ENCODE measurements at regions of chr5 and their contacts with region 1.

Region 1: DNA sequence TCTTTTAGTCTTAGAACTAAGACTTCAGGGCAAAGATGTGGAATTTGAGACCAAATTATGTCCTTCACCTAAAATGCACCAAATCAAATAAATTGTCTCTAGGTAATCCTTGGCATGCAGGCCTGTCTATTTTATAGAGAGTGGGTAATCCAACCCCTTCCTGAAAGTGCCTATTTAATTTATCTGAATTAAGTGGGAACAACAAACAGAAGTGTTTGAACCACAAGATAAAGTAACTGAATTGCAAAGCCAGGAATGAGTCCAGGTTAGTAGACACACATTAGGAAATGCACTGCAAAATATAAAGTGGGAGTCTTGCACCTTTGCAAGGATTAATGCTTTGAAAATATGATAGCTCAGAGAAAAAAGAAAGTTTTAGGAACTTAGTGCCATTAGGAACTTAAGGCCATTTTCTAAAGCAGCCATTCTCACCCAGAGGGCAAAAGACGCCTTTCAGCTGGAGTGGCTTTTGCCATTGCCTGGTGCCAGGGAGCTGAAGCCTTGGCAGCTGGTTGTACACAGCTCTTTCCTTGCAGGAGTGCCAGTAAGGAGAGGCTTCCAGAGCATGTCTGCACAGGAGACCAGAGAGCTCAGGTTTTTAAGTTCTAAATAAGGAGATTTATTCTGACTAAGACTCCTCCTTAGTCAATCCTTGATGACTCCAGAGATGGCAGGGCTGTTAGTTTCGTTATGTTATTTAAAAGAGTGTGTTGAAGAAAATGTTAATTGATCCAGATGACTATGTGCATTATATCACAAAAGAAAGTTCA is 151.7 kb upstream of the ELL2 start:
- DNase-seq: peak; percentile 13
- H3K4me3 Mint-ChIP-seq: no peak overlapping the region
- H3K27ac Mint-ChIP-seq: no peak overlapping the region
- H3K4me1 Mint-ChIP-seq: peaks cover 41% of the 10 kb centered on the region
- H3K27me3 Mint-ChIP-seq: peaks cover 4% of the 10 kb centered on the region

Region 2: DNA sequence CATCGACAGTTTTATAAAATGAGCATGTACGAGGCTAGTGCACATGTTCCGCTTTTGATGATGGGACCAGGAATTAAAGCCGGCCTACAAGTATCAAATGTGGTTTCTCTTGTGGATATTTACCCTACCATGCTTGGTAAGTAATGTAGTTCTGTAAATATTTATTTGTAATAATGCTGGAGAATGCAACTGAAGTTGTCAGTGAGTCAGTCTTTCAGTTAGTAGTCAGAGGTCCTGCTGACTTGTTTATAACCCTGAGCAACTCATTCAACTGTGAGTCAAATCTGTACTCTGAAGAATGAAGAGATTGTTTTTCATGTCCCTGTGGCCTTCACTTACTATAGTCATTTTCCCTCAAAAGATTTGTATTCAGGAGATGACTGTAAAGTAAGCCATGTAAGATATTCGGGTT is 521.9 kb before region 1 on chr5:
- CTCF ChIA-PET with region 1: no interaction called
- POLR2A ChIA-PET with region 1: no interaction called
- intact Hi-C with region 1: loop called (anchors 10 kb)
- DNase-seq: no peak
- H3K4me3 Mint-ChIP-seq: no peak overlapping the region
- H3K27ac Mint-ChIP-seq: no peak overlapping the region
- H3K4me1 Mint-ChIP-seq: peaks cover 30% of the 10 kb centered on the region
- H3K27me3 Mint-ChIP-seq: no peaks in the 10 kb centered on the region

Region 3: GRCh38 chr5:96065577-96066385 is 47.6 kb before region 1 on chr5:
- CTCF ChIA-PET with region 1: no interaction called
- POLR2A ChIA-PET with region 1: no interaction called
- intact Hi-C with region 1: loop called (anchors 1 kb)
- DNase-seq: peak; percentile 38
- H3K4me3 Mint-ChIP-seq: no peak overlapping the region
- H3K27ac Mint-ChIP-seq: peak overlapping the region; percentile 83
- H3K4me1 Mint-ChIP-seq: peaks cover 48% of the 10 kb centered on the region
- H3K27me3 Mint-ChIP-seq: no peaks in the 10 kb centered on the region

Region 4: GRCh38 chr5:96079075-96079474 is 34.3 kb before region 1 on chr5:
- CTCF ChIA-PET with region 1: interaction called, 4 read pairs
- POLR2A ChIA-PET with region 1: no interaction called
- intact Hi-C with region 1: loop called (anchors 1 kb)
- DNase-seq: peak; percentile 67
- H3K4me3 Mint-ChIP-seq: no peak overlapping the region
- H3K27ac Mint-ChIP-seq: peak overlapping the region; percentile 89
- H3K4me1 Mint-ChIP-seq: peaks cover 45% of the 10 kb centered on the region
- H3K27me3 Mint-ChIP-seq: peaks cover 5% of the 10 kb centered on the region

Region 5: DNA sequence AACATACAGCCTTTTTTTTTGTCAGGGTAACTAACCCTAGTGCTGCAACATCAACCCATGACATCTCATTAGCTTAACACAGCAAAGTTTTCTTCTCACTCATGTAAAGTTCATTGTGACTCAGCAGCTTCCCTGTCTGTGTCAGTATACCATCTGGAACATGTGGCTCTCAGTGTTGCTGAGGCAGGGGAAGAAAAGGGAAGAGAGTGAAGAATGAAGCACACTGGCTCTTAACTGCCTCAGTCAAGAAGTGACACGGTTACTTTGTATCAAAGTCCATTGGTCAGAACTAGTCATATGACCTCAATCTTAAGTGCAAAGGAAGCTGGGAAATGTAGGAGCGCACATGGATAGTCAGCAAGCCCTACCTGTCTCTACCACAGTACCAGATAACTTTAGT is 33.3 kb after region 1 on chr5:
- CTCF ChIA-PET with region 1: no interaction called
- POLR2A ChIA-PET with region 1: no interaction called
- intact Hi-C with region 1: loop called (anchors 2 kb)
- DNase-seq: peak; percentile 30
- H3K4me3 Mint-ChIP-seq: no peak overlapping the region
- H3K27ac Mint-ChIP-seq: no peak overlapping the region
- H3K4me1 Mint-ChIP-seq: peaks cover 4% of the 10 kb centered on the region
- H3K27me3 Mint-ChIP-seq: no peaks in the 10 kb centered on the region

Region 6: GRCh38 chr5:96177303-96177869 is 64.0 kb after region 1 on chr5:
- CTCF ChIA-PET with region 1: no interaction called
- POLR2A ChIA-PET with region 1: no interaction called
- intact Hi-C with region 1: loop called (anchors 2 kb)
- DNase-seq: peak; percentile 14
- H3K4me3 Mint-ChIP-seq: no peak overlapping the region
- H3K27ac Mint-ChIP-seq: no peak overlapping the region
- H3K4me1 Mint-ChIP-seq: no peaks in the 10 kb centered on the region
- H3K27me3 Mint-ChIP-seq: peaks cover 9% of the 10 kb centered on the region

Measured in activated CD4-positive, alpha-beta memory T cell treated with anti-CD3 and anti-CD28 coated beads for 36 hours (primary cell).